Head of caudate nucleus (tissue), 42 donors: ENCODE measurements at regions of chr7 and their contacts with region 1.

Region 1: DNA sequence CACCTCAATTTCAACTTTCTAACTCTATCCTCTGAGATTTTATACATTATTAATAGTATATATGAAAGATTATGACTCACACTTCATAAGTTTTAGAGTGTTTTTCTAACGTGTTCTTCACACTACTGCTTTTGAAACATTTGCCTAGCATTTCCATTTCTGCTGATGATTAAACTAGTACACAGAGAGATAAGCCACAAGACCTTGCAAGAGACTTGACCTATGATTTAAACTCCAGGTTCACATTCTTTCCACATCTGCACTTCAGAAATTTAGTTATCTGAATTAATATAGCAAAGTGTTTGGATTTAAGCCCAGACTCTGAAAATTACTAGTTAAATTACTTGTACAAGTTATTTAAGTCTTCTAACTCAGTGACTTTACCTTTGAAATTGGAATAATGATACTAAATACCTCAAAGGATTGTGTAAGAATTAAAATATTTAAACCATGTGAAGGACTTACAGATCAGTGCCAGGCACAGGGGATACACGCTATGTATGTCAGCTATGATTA is 66.6 kb downstream of the PCLO start:
- DNase-seq: no peak

Region 2: GRCh38 chr7:83072576-83073517 is 23.3 kb before region 1 on chr7:
- intact Hi-C with region 1: loop called (anchors 2 kb)
- DNase-seq: no peak

Region 3: GRCh38 chr7:83271212-83272099 is 175.3 kb after region 1 on chr7:
- intact Hi-C with region 1: no loop called
- DNase-seq: peak in 8 of 42 donors; percentile 2 to 41 (median 24)